T-cell (primary cell): ENCODE measurements at regions of chr6 and their contacts with region 1.

Region 1: DNA sequence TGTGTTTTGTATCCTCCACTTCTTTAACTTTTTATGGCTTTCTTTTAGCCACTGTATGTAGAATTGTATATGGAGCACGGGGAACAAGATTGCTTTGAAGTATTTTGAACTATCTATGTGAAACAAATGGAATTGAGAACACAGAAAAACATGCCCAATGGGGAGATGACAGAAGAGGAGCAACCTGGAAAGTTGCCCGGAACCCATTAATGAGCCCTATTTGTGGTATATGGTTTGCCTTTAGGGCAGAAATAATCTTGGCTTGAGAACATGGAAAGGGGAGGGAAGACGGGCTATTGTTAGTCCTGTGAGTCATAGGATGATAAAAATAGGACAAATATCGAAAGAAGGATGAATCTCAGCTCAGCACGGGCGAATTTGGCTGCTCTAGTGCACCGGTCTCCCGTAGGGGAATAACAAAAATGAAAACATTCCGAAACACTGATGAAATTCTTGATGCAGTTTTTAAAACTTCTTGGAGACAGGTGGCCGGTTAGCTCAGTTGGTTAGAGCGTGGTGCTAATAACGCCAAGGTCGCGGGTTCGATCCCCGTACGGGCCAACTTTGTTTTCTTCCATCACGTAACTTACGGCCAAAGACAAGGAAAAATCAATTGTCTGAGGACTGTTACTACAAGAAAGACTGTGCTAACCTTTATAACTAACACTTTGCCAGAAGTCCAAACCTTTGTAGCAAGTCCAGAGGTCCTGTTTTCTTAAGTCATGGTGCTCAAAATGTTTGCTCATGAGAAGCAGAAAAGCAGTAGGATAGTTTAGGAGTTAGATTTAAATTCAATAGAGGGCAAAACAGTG is 15.7 kb downstream of the HMGN4 start:
- DNase-seq: peak in 34 of 35 experiments; percentile 32 to 89 (median 62)
- ATAC-seq: peak; percentile 32 to 56 (median 50)
- H3K4me3 ChIP-seq: peak overlapping the region; percentile 62 to 79
- H3K4me3 Mint-ChIP-seq: no peak overlapping the region
- H3K27ac ChIP-seq: peak overlapping the region; percentile 47
- H3K27ac Mint-ChIP-seq: no peak overlapping the region
- H3K4me1 ChIP-seq: peaks cover 23 to 27% of the 10 kb centered on the region in 2 experiments
- H3K4me1 Mint-ChIP-seq: peaks cover 18 to 24% (median 22%) of the 10 kb centered on the region in 3 donors
- H3K27me3 ChIP-seq: no peaks in the 10 kb centered on the region
- H3K27me3 Mint-ChIP-seq: peaks cover 0 to 1% of the 10 kb centered on the region in 2 donors

Region 2: DNA sequence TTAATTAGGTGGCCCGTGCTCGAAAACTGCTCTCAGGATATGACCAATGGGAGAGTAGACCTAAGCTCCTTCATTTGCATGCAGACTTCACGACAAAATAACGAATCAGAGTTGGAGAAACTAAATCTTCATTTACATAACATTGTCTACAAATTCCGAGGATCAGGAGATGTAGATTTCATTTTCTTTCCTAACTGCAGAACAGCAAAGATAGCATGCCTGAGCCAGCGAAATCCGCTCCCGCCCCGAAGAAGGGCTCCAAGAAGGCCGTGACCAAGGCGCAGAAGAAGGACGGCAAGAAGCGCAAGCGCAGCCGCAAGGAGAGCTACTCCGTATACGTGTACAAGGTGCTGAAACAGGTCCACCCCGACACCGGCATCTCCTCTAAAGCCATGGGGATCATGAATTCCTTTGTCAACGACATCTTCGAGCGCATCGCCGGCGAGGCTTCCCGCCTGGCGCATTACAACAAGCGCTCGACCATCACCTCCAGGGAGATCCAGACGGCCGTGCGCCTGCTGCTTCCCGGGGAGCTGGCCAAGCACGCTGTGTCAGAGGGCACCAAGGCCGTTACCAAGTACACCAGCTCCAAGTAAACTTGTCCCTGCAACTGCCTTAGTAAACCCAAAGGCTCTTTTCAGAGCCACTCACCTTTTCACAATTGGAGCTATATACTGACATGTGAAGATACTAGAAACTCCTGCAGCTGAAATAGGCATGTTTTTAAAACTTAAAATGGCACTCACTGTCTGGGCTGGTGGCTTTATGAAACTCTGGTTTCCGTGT is 370.1 kb before region 1 on chr6:
- CTCF ChIA-PET with region 1: no interaction called
- POLR2A ChIA-PET with region 1: interaction called in 1 of 2 experiments, 10 read pairs
- DNase-seq: peak in 25 of 35 experiments; percentile 20 to 85 (median 42)
- ATAC-seq: peak; percentile 87 to 91 (median 89)
- H3K4me3 ChIP-seq: peak overlapping the region; percentile 57 to 83
- H3K4me3 Mint-ChIP-seq: peak overlapping the region; percentile 88 to 96 (median 93)
- H3K27ac ChIP-seq: peak overlapping the region; percentile 76
- H3K27ac Mint-ChIP-seq: peak overlapping the region; percentile 94 to 98
- H3K4me1 ChIP-seq: peaks cover 12 to 30% of the 10 kb centered on the region in 2 experiments
- H3K4me1 Mint-ChIP-seq: peaks cover 42 to 48% (median 46%) of the 10 kb centered on the region in 3 donors
- H3K27me3 ChIP-seq: no peaks in the 10 kb centered on the region
- H3K27me3 Mint-ChIP-seq: no peaks in the 10 kb centered on the region

Region 3: GRCh38 chr6:26485112-26485780 is 68.6 kb before region 1 on chr6:
- CTCF ChIA-PET with region 1: no interaction called
- POLR2A ChIA-PET with region 1: no interaction called
- DNase-seq: no peak
- ATAC-seq: no peak
- H3K4me3 ChIP-seq: no peak overlapping the region
- H3K4me3 Mint-ChIP-seq: no peak overlapping the region
- H3K27ac ChIP-seq: no peak overlapping the region
- H3K27ac Mint-ChIP-seq: no peak overlapping the region
- H3K4me1 ChIP-seq: no peaks in the 10 kb centered on the region
- H3K4me1 Mint-ChIP-seq: peaks cover 0 to 5% (median 2%) of the 10 kb centered on the region in 3 donors
- H3K27me3 ChIP-seq: no peaks in the 10 kb centered on the region
- H3K27me3 Mint-ChIP-seq: no peaks in the 10 kb centered on the region

Region 4: GRCh38 chr6:26537846-26538571 is 15.8 kb before region 1 on chr6 and contains the start of gene HMGN4:
- CTCF ChIA-PET with region 1: interaction called in 1 of 2 experiments, 13 read pairs
- POLR2A ChIA-PET with region 1: interaction called, 4 to 8 read pairs
- DNase-seq: peak; percentile 66 to 96 (median 81)
- ATAC-seq: peak; percentile 71 to 78 (median 74)
- H3K4me3 ChIP-seq: peak within 1 kb of the TSS; percentile 95 to 96
- H3K4me3 Mint-ChIP-seq: peak within 1 kb of the TSS; percentile 94 to 96 (median 95)
- H3K27ac ChIP-seq: peak within 1 kb of the TSS; percentile 91
- H3K27ac Mint-ChIP-seq: peak within 1 kb of the TSS; percentile 91 to 95
- H3K4me1 ChIP-seq: peaks cover 37 to 50% of the 10 kb centered on the region in 2 experiments
- H3K4me1 Mint-ChIP-seq: peaks cover 64 to 71% (median 68%) of the 10 kb centered on the region in 3 donors
- H3K27me3 ChIP-seq: no peaks in the 10 kb centered on the region
- H3K27me3 Mint-ChIP-seq: peaks cover 0 to 4% of the 10 kb centered on the region in 2 donors
- total RNA-seq, gene HMGN4: 49.2 to 92.5 (median 62.7) TPM

Region 5: DNA sequence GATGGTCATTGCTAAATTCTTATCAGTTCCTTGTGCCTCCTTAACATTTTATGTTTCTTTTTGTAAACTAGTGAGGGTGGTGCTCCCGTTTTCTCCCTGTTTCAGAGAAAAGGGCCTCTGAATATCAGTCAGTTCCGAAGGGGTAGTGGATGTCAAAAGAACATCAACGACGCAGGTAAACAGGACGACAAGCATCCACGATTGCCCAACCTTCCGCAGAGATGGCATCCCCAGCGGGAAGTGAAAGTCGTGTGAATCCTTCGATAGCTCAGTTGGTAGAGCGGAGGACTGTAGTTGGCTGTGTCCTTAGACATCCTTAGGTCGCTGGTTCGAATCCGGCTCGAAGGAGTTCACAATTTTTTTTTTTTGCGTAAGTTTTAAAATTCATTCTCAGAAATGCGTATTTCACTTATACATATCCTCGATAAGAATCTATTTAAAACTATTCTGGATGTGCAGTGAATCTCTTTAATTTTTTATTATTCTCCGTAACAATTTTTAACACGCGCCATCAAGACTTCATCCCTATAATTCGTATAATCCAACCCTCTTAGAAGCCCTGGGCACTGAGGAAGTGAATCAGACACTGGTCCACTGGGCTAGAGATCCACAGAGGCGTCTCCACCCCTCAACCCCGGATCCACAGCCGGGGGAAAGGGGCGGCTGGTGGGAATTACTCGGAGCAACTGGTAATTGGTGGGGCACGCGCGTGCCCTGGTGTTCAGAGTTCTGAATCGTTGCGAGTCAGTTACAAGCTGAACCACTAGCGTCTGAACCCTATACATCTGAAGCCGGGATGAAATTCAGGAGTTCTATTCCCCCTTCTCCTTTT is 15.0 kb after region 1 on chr6:
- CTCF ChIA-PET with region 1: interaction called, 6 to 11 read pairs
- POLR2A ChIA-PET with region 1: interaction called in 1 of 2 experiments, 4 read pairs
- DNase-seq: peak; percentile 89 to 100 (median 98)
- ATAC-seq: peak; percentile 77 to 83 (median 82)
- H3K4me3 ChIP-seq: peak overlapping the region; percentile 51 to 79
- H3K4me3 Mint-ChIP-seq: peak overlapping the region; percentile 92 to 94 (median 93)
- H3K27ac ChIP-seq: peak overlapping the region; percentile 50
- H3K27ac Mint-ChIP-seq: peak overlapping the region; percentile 97 to 98
- H3K4me1 ChIP-seq: peaks cover 5 to 19% of the 10 kb centered on the region in 2 experiments
- H3K4me1 Mint-ChIP-seq: peaks cover 26 to 33% (median 28%) of the 10 kb centered on the region in 3 donors
- H3K27me3 ChIP-seq: no peaks in the 10 kb centered on the region
- H3K27me3 Mint-ChIP-seq: peaks cover 4% of the 10 kb centered on the region in 2 donors